Calu3 (cell line): ENCODE measurements at regions of chr3 and their contacts with region 1.

Region 1: GRCh38 chr3:169772897-169773828 is at the start of gene MYNN:
- DNase-seq: peak; percentile 97
- H3K4me3 Mint-ChIP-seq: peak within 1 kb of the TSS; percentile 96
- H3K27ac Mint-ChIP-seq: peak within 1 kb of the TSS; percentile 97
- H3K4me1 Mint-ChIP-seq: peaks cover 17% of the 10 kb centered on the region
- H3K27me3 Mint-ChIP-seq: no peaks in the 10 kb centered on the region
- CTCF ChIP-seq: no peak
- total RNA-seq, gene MYNN: 19.9 and 22.9 TPM in 2 replicates

Region 2: DNA sequence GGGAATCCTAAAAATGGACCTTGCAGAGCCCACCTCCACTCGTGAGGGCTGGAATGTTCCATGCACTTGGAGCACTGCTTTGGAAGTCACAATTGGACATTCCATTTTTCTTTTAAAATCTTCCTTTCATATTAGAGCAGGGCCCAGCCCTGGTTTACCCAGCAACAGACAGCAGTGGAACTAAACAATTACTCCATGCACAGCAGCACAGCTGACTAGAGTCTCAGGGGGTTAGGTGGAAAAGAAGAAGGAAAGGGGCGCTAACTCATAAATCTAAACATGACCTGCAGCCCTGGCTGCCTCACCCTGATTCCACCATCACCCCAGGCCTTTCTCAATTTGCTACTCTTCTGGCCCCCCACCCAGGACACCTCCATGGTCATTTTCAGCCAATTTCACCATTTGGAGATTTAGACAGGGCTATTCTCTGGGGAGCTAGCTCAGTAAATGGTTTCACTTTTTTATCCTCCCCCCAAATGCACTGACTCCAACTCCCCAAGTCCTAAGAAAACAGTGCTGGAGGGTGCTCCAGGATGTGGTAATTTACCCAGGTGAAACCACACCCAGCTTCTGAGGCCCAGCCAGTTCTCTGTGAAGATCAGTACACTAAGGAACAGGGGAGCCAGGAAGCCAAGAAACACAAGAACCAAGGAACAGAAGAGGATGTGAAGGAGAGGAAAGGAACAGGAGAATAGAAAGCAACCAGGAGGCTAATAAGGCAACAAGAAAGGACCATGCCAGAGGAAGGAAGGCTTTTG is 98.1 kb after region 1 on chr3:
- CTCF ChIA-PET with region 1: interaction called, 3 read pairs
- intact Hi-C with region 1: loop called (anchors 5 kb)
- DNase-seq: peak; percentile 58
- H3K4me3 Mint-ChIP-seq: peak overlapping the region; percentile 4
- H3K27ac Mint-ChIP-seq: peak overlapping the region; percentile 58
- H3K4me1 Mint-ChIP-seq: peaks cover 35% of the 10 kb centered on the region
- H3K27me3 Mint-ChIP-seq: no peaks in the 10 kb centered on the region
- CTCF ChIP-seq: no peak

Region 3: GRCh38 chr3:170044795-170045244 is 271.7 kb after region 1 on chr3:
- CTCF ChIA-PET with region 1: no interaction called
- intact Hi-C with region 1: loop called (anchors 5 kb)
- DNase-seq: no peak
- H3K4me3 Mint-ChIP-seq: peak overlapping the region; percentile 60
- H3K27ac Mint-ChIP-seq: peak overlapping the region; percentile 63
- H3K4me1 Mint-ChIP-seq: peaks cover 56% of the 10 kb centered on the region
- H3K27me3 Mint-ChIP-seq: no peaks in the 10 kb centered on the region
- CTCF ChIP-seq: no peak

Region 4: GRCh38 chr3:170908235-170909116 is 1135.3 kb after region 1 on chr3 and contains the start of gene EIF5A2:
- CTCF ChIA-PET with region 1: interaction called, 10 read pairs
- intact Hi-C with region 1: no loop called
- DNase-seq: peak; percentile 94
- H3K4me3 Mint-ChIP-seq: peak within 1 kb of the TSS; percentile 86
- H3K27ac Mint-ChIP-seq: peak within 1 kb of the TSS; percentile 69
- H3K4me1 Mint-ChIP-seq: no peaks in the 10 kb centered on the region
- H3K27me3 Mint-ChIP-seq: no peaks in the 10 kb centered on the region
- CTCF ChIP-seq: peak; percentile 13
- total RNA-seq, gene EIF5A2: 9.4 and 10.4 TPM in 2 replicates